Activated naive CD4-positive, alpha-beta T cell treated with anti-CD3 and anti-CD28 coated beads for 36 hours (primary cell): ENCODE measurements at regions of chr4 and their contacts with region 1.

Region 1: GRCh38 chr4:98601708-98602107 is 56.7 kb downstream of the TSPAN5 start:
- DNase-seq: peak; percentile 63
- H3K4me3 Mint-ChIP-seq: peak overlapping the region; percentile 41
- H3K27ac Mint-ChIP-seq: peak overlapping the region; percentile 84
- H3K4me1 Mint-ChIP-seq: peaks cover 46% of the 10 kb centered on the region
- H3K27me3 Mint-ChIP-seq: no peaks in the 10 kb centered on the region

Region 2: DNA sequence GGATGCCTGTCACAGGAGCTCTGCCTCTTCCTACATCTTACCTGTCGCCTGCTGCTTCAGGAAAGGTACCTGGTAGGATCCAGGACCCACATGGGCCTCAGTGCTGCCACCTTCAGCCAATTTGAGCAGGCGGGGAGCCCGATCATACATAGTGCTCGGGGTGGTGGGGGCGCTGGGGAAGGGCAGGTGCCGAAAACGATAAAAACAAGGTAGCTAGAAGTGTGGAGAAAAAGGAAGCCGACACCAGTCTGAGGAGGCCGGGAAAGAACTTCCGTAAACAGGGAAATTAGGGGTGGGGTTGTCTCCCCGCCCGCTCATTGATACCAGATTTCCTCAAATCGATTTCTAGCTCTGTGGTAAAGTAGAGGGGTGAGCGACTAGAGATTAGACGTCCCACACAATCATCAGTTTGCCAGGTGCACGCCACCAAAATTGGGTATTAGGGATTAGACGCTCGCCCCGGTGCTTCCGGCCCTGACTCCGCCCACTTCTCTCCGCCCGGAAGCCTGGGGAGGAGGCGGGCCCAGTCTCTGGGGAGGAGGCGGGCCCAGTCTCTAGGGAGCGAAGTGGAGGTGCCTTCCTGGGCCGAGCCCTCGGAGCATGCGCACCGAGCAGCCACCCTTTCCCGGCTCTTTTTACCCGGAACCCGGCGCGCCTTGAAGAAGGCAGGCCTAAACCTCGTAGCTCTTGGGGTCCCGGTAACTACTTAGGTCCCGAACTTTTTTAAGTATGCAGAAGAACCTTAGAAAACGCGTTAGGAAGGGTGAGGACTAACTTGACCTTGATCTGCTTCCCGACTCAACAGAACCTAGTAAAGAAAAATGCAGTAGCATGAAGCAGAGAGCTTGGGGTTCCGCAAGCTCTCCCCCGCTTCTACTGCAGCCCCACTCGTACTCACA is 458.5 kb before region 1 on chr4 and contains the start of gene STPG2:
- CTCF ChIA-PET with region 1: no interaction called
- intact Hi-C with region 1: loop called (anchors 1 kb)
- DNase-seq: peak; percentile 95
- H3K4me3 Mint-ChIP-seq: peak within 1 kb of the TSS; percentile 96
- H3K27ac Mint-ChIP-seq: peak within 1 kb of the TSS; percentile 99
- H3K4me1 Mint-ChIP-seq: peaks cover 19% of the 10 kb centered on the region
- H3K27me3 Mint-ChIP-seq: no peaks in the 10 kb centered on the region
- total RNA-seq, gene STPG2: not detected

Region 3: DNA sequence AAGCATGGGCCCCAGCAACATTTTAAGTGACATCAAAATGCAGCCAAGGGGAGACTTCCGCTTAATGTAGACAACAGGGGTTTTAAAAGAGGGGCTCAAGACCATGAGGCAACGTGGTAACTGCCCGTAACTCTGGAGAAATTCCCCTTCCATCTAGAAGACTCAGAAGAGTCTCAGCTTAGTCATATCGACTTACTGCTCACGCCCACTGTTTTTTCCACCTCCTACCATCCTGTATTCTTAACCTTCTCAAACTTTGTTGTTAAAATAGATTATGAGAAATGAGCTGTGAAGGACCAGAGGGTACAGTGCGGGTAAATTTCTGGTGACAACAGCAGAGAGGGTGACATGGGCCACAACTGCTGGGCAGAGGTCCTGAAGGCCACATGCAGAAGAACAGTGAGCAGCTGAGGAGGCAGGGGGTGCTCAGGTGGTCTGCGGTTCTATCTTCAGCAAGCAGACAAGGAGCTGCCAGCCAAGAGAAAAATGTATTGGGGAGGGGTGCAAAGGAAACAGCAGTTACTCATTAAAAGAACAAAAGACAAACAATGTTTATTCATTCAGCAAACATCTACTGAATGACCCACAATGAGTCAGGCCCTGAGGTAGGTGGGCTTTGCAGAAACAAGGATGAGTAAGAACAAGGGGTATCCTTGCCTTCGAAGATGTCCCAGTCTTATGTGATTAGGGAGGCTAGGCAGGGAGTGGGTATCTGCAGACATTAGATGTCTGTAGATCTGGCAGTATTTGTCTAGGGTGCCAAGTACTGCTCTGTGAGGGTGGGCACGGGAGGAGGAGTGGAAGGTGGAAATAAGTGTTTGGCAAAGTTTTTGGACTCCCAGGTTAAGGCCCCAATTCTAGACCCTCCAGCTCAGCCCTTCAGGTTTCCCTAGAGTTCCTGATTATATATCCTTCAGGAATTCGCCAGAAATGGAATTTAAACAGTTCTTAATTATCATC is 118.6 kb before region 1 on chr4:
- CTCF ChIA-PET with region 1: interaction called, 4 read pairs
- intact Hi-C with region 1: loop called (anchors 1 kb)
- DNase-seq: peak; percentile 74
- H3K4me3 Mint-ChIP-seq: peak overlapping the region; percentile 45
- H3K27ac Mint-ChIP-seq: peak overlapping the region; percentile 94
- H3K4me1 Mint-ChIP-seq: peaks cover 78% of the 10 kb centered on the region
- H3K27me3 Mint-ChIP-seq: no peaks in the 10 kb centered on the region

Region 4: GRCh38 chr4:98544141-98544817 is 57.4 kb before region 1 on chr4:
- CTCF ChIA-PET with region 1: interaction called, 4 read pairs
- intact Hi-C with region 1: loop called (anchors 2 kb)
- DNase-seq: peak; percentile 15
- H3K4me3 Mint-ChIP-seq: no peak overlapping the region
- H3K27ac Mint-ChIP-seq: peak overlapping the region; percentile 15
- H3K4me1 Mint-ChIP-seq: peaks cover 19% of the 10 kb centered on the region
- H3K27me3 Mint-ChIP-seq: no peaks in the 10 kb centered on the region

Region 5: DNA sequence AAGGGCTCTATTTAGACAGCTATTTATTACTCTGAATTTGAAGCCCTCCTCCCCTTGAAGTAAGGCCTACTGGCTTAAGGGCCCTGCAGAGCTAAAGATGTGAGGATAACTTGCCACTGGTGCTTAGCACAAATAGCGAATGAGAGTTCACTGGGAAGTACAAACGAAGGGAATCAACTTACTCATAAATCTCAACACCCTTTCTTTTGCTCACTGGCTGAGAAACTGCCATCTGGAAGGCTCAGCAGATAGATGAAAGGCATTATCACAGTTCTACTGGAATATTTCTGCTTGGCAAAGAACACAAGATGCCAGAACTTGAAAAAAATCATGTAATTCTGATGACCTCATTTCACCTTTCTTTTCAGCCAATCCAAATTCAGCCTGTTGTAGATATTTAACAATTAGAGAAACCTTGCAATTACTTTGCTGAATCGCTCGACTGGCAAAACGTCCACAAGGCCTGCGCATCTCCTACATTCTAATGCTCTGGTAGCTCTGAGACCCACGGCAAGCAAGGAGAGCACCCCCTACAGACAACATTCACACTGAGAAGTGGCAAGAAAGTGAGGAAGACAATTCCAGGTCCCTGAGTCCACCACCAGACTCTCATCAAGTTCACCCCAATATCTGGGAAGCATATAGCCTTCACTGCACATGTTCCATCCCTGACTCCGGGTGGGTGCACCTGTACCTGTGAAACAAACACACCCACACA is 29.2 kb after region 1 on chr4:
- CTCF ChIA-PET with region 1: no interaction called
- intact Hi-C with region 1: no loop called
- DNase-seq: no peak
- H3K4me3 Mint-ChIP-seq: no peak overlapping the region
- H3K27ac Mint-ChIP-seq: no peak overlapping the region
- H3K4me1 Mint-ChIP-seq: peaks cover 34% of the 10 kb centered on the region
- H3K27me3 Mint-ChIP-seq: no peaks in the 10 kb centered on the region

Region 6: GRCh38 chr4:98706200-98706813 is 104.6 kb after region 1 on chr4:
- CTCF ChIA-PET with region 1: no interaction called
- intact Hi-C with region 1: loop called (anchors 5 kb)
- DNase-seq: peak; percentile 15
- H3K4me3 Mint-ChIP-seq: no peak overlapping the region
- H3K27ac Mint-ChIP-seq: peak overlapping the region; percentile 39
- H3K4me1 Mint-ChIP-seq: peaks cover 24% of the 10 kb centered on the region
- H3K27me3 Mint-ChIP-seq: no peaks in the 10 kb centered on the region

Region 7: GRCh38 chr4:99054428-99054994 is 452.8 kb after region 1 on chr4:
- CTCF ChIA-PET with region 1: no interaction called
- intact Hi-C with region 1: loop called (anchors 5 kb)
- DNase-seq: no peak
- H3K4me3 Mint-ChIP-seq: no peak overlapping the region
- H3K27ac Mint-ChIP-seq: peak overlapping the region; percentile 50
- H3K4me1 Mint-ChIP-seq: peaks cover 44% of the 10 kb centered on the region
- H3K27me3 Mint-ChIP-seq: no peaks in the 10 kb centered on the region